HepG2 (cell line): ENCODE measurements at regions of chr13 and their contacts with region 1.

Region 1: DNA sequence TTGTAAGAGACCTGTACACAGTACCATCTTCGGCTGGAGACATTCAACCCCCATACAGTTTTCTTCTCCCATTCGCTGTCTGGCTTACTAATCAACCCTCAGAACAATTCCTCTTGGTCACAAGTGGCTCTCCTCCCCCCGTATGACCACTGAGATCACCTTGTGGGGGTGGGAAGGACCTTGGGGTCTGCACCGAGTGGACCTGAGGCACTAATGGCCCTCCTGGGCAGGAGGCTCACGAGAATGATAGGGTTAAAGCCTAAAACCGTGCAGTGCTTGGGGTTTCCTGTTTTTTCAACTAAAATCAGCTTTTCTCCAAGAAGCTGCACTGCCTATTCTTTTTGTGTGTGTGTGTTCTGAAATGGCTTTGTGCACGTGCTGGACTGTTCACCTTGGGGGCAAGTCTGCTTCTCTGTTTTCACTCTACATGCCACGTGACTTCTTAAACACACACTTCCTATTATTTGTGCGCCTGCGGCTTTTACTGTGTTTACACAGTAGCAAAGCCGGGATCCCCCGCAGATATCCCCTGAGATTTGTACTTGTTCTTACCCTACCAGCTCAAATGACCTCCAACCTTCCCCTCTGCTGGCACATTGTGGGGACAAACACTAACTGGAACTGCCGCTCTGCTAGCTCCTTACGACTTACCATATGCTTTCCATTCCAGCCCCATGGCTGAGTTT is 12.3 kb downstream of the RBM26 start:
- DNase-seq: peak; percentile 93
- ATAC-seq: peak; percentile 91
- H3K4me3 ChIP-seq: peak overlapping the region; percentile 11 to 57 (median 13); a peak in 4 of 6 replicates
- H3K27ac ChIP-seq: peak overlapping the region; percentile 71
- H3K4me1 ChIP-seq: peaks cover 40% of the 10 kb centered on the region
- H3K27me3 ChIP-seq: no peaks in the 10 kb centered on the region
- CTCF ChIP-seq: no peak
- EP300 ChIP-seq: peak in 1 of 2 experiments; percentile 44; a peak in 3 of 4 replicates
- POLR2A ChIP-seq: peak in 1 of 2 experiments; percentile 31; a peak in 1 of 4 replicates
- RAD21 ChIP-seq: 0 out of 2 replicates have a peak, but pooled peaks have one; percentile 4

Region 2: DNA sequence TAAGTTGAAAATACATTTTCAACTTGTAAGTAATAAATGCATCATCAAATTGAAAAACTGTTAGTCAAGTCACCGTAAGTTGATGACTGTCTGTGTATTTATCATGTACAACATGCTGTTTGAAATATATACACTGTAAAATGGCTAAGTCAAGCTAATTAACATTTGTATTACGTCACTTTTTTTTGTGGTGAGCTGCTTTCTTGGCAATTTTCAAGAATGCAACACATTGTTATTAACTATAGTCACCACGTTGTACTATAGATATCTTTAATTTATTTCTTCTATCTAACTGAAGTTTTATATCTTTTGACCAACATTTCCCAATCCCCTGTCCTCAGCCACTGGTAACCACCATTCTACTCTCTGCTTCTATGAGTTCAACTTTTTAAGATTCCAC is 44.7 kb before region 1 on chr13:
- CTCF ChIA-PET with region 1: no interaction called
- POLR2A ChIA-PET with region 1: no interaction called
- in situ Hi-C with region 1: no loop called
- intact Hi-C with region 1: loop called (anchors 5 kb)
- DNase-seq: no peak
- ATAC-seq: no peak
- H3K4me3 ChIP-seq: no peak overlapping the region
- H3K27ac ChIP-seq: no peak overlapping the region
- H3K4me1 ChIP-seq: no peaks in the 10 kb centered on the region
- H3K27me3 ChIP-seq: no peaks in the 10 kb centered on the region; a peak in 1 of 5 replicates
- CTCF ChIP-seq: no peak
- EP300 ChIP-seq: no peak
- POLR2A ChIP-seq: no peak
- RAD21 ChIP-seq: no peak

Region 3: GRCh38 chr13:79405829-79406596 is 12.3 kb after region 1 on chr13 and contains the start of gene RBM26:
- CTCF ChIA-PET with region 1: no interaction called
- POLR2A ChIA-PET with region 1: interaction called, 24 read pairs
- in situ Hi-C with region 1: no loop called
- intact Hi-C with region 1: loop called (anchors 1 kb)
- DNase-seq: peak; percentile 91
- ATAC-seq: peak; percentile 91
- H3K4me3 ChIP-seq: peak within 1 kb of the TSS; percentile 86 to 94 (median 92)
- H3K27ac ChIP-seq: peak within 1 kb of the TSS; percentile 98
- H3K4me1 ChIP-seq: peaks cover 47% of the 10 kb centered on the region
- H3K27me3 ChIP-seq: no peaks in the 10 kb centered on the region; a peak in 1 of 5 replicates
- CTCF ChIP-seq: 0 out of 2 replicates have a peak, but pooled peaks have one; percentile 18
- EP300 ChIP-seq: no peak
- POLR2A ChIP-seq: peak; percentile 87 to 94
- RAD21 ChIP-seq: no peak; the same call in 1 of the 2 replicates
- total RNA-seq, gene RBM26: 28.6 and 34.4 TPM in 2 replicates